K562 (cell line): ENCODE measurements at regions of chr17 and their contacts with region 1.

Region 1: DNA sequence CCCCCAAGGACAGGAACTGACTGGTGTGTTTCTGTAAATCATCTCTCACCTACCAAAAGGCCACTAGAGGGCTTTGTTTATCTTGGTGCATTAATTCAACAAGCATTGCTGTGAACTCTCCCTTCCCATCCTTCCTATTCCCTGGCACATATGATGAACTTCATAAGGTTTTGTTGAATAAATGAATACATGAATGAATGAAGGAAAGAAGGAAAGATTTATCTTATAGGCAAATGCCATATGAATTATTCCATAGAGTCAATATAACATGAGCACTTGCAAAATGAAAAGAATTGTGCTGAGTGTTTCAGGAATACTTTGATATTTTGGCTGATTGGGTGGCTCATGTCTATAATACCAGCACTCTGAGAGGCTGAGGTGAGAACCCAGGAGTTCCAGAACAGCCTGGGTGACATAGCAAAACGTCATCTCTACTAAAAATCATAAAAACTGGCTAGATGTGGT is 4.3 kb downstream of the SPDYE4 start:
- DNase-seq: peak in 1 of 4 experiments; percentile 14
- ATAC-seq: no peak; the same call in 2 of the 3 replicates
- H3K4me3 ChIP-seq: no peak overlapping the region
- H3K27ac ChIP-seq: no peak overlapping the region
- H3K4me1 ChIP-seq: no peaks in the 10 kb centered on the region
- H3K27me3 ChIP-seq: peaks cover 6 to 33% of the 10 kb centered on the region in 2 experiments; a peak in 3 of 5 replicates
- CTCF ChIP-seq: peak; percentile 15 to 39 (median 34); a peak in 4 of 6 replicates
- EP300 ChIP-seq: no peak
- POLR2A ChIP-seq: no peak
- RAD21 ChIP-seq: peak in 1 of 2 experiments; percentile 33; a peak in 2 of 4 replicates

Region 2: DNA sequence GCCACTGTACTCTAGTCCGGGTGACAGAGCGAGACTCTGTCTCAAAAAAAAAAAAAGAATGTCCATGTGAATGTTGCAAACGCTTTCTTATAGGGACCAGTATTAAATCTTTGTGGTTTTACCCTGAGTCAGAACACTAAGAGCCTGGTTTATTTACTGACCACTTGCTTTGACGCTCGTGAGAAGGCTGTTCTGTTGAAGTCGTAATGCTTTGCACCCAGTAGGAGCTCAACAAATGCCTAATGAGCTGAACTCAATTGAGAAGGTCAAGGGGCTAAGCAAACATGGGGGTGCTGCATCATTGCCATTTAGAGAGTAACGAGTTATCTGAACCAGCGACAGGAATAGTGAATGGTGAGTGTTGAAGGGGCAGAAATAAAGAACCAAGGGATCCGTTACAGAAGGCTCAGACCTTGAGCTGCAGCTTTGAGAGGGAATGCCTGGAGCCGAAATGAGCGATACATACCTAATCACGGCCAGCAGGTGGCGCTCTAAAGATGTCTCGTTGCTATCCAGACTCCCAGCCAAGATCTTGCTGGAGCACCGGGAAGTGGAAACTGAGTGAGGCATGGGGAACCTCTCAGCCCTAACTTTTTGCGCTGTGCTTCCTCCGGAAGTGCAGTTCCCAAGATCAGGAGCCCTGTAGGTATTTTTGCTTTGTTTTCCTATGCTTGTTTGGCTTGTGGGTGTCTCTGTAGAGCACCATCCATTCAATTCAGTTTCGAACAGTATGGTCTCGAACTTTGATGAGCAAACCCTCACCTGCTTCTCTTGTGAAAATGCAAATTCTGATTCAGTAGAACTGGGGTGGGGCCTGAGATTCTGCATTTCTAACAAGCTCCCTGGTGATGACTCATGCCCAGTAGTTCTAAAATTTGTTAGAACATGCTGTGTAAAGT is 343.8 kb before region 1 on chr17:
- CTCF ChIA-PET with region 1: no interaction called
- POLR2A ChIA-PET with region 1: interaction called, 4 read pairs
- in situ Hi-C with region 1: loop called (anchors 10 kb)
- intact Hi-C with region 1: loop called (anchors 10 kb)
- DNase-seq: peak; percentile 59 to 88 (median 63)
- ATAC-seq: peak; percentile 88
- H3K4me3 ChIP-seq: no peak overlapping the region
- H3K27ac ChIP-seq: no peak overlapping the region; the same call in 2 of the 3 replicates
- H3K4me1 ChIP-seq: peaks cover 13% of the 10 kb centered on the region in 2 experiments; a peak in 4 of 5 replicates
- H3K27me3 ChIP-seq: no peaks in the 10 kb centered on the region
- CTCF ChIP-seq: peak; percentile 65 to 89 (median 77)
- EP300 ChIP-seq: no peak
- POLR2A ChIP-seq: no peak
- RAD21 ChIP-seq: peak; percentile 61 to 83